OCI-LY7 (cell line): ENCODE measurements at regions of chr14 and their contacts with region 1.

Region 1: DNA sequence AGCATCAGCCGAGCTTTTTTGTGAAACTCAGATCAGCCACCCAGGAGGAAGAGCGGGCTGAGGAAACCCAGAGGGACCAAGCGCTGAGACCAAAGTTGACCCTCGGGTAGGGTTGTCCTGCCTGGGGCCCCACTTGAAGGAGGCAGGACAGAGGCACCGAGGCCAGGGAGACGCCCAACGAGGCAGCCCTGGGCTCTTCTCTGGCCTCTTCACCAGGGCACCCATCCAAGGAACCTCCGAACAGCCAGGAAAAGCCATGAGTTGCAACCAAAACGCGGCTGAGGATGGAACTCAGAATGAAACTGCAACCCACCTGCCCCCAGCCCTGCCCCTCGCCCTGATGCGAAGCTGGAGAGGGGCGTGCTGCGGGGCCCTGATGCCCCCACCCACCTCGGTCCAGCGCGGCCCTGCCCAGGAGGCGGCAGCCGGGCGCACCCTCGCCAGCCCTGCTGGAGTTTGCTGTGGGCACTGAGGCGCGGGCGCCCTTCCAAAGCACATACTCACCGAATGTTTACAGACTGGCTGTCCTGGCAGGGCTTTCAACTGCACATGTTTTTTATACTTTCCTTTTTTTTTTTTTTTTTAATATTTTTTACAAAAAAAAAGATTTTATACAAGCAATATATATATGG is 41.9 kb downstream of the JDP2 start:
- DNase-seq: no peak
- H3K4me3 ChIP-seq: peak overlapping the region; percentile 50
- H3K27ac ChIP-seq: peak overlapping the region; percentile 98
- H3K4me1 ChIP-seq: peaks cover 95% of the 10 kb centered on the region
- CTCF ChIP-seq: no peak

Region 2: DNA sequence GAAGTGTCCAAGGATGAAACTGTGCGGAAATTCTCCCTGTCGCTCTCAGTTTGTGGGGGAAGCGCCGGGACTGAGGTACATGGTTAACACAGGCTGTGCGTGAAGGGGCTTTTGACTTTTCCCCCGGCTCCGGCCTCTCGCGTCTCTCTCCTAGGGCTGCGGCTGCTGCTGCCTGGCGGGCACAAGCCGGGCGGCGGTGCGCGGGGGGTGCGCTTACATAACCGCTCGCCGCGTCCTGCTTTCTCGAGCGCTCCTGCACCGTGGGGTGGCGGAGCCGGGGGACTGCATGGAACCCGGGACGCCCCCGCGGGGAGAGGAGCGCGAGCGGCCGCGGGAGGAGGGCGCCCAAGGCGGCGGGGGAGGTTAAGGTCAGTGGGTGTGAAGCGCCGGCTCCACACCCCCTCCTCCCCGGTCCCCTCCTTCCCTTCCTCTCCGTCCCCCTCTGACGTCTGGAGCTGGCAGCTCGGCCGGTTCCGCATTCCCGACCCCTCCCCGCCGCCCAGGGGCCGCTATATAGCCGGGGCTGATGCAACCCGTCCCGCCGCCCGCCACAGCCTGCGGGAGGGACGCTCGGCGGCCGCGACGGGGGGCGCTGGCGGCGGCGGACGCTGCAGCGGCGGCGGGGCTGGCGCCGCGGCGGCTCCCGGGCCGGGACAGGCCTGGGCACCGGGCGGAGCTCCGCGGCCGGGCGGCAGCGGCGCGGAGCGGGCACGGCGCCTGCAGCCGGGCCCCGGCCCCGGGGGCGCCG is 42.1 kb before region 1 on chr14 and contains the start of gene JDP2:
- CTCF ChIA-PET with region 1: interaction called, 4 read pairs
- POLR2A ChIA-PET with region 1: interaction called, 4 read pairs
- intact Hi-C with region 1: loop called (anchors 2 kb)
- DNase-seq: peak; percentile 80
- H3K4me3 ChIP-seq: peak within 1 kb of the TSS; percentile 90
- H3K27ac ChIP-seq: peak within 1 kb of the TSS; percentile 77
- H3K4me1 ChIP-seq: peaks cover 46% of the 10 kb centered on the region
- CTCF ChIP-seq: peak; percentile 33; the same call in 1 of the 2 replicates
- total RNA-seq, gene JDP2: 53.7 and 62.7 TPM in 2 replicates

Region 3: DNA sequence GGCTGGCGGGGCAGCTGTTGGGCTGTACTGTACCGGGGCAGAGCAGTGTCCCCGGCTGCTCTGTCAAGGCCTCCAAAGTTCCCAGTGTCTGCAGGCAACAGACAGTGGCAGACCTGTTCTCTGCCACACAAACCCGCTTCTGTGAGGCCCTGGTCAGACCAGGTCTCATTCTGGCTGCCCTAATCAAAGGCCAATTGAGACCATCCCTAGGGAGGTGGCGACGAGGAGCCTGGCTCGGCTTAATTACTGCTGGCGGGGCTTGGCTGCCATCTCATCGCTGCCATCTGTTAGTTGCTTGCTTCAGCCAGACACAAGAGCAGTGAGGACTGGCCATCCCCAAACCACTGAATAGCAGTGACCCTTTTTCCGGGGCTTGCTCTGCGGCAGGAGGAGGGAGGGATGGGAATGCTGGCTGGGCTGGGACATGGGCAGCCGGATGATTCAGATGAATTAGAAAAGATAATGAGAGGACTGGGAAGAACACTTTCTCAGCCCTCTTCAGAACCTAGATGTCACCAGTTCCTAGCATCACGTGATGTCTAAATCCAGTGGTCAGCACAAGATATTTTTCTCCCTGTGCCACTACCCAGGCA is 166.5 kb after region 1 on chr14:
- CTCF ChIA-PET with region 1: no interaction called
- POLR2A ChIA-PET with region 1: no interaction called
- intact Hi-C with region 1: no loop called
- DNase-seq: no peak
- H3K4me3 ChIP-seq: no peak overlapping the region
- H3K27ac ChIP-seq: no peak overlapping the region
- H3K4me1 ChIP-seq: no peaks in the 10 kb centered on the region
- CTCF ChIP-seq: no peak